ENCODE measurements at regions of chr6 and their contacts with region 1.

Region 1: GRCh38 chr6:156879186-156879585 is 102.0 kb downstream of the ARID1B start:
- DNase-seq: no peak
- H3K27ac ChIP-seq: no peak overlapping the region
- CTCF ChIP-seq: no peak

Region 2: GRCh38 chr6:156933201-156934068 is 54.2 kb after region 1 on chr6:
- CTCF ChIA-PET with region 1: no interaction called
- POLR2A ChIA-PET with region 1: no interaction called
- DNase-seq: no peak
- H3K27ac ChIP-seq: no peak overlapping the region
- CTCF ChIP-seq: no peak

Region 3: GRCh38 chr6:156948277-156948676 is 69.1 kb after region 1 on chr6:
- CTCF ChIA-PET with region 1: interaction called, 12 read pairs
- POLR2A ChIA-PET with region 1: interaction called, 3 read pairs
- DNase-seq: no peak
- H3K27ac ChIP-seq: peak overlapping the region; percentile 67
- CTCF ChIP-seq: no peak

Measured in RWPE1 (cell line).